Posterior vena cava (tissue), 2 donors: ENCODE measurements at regions of chr6 and their contacts with region 1.

Region 1: DNA sequence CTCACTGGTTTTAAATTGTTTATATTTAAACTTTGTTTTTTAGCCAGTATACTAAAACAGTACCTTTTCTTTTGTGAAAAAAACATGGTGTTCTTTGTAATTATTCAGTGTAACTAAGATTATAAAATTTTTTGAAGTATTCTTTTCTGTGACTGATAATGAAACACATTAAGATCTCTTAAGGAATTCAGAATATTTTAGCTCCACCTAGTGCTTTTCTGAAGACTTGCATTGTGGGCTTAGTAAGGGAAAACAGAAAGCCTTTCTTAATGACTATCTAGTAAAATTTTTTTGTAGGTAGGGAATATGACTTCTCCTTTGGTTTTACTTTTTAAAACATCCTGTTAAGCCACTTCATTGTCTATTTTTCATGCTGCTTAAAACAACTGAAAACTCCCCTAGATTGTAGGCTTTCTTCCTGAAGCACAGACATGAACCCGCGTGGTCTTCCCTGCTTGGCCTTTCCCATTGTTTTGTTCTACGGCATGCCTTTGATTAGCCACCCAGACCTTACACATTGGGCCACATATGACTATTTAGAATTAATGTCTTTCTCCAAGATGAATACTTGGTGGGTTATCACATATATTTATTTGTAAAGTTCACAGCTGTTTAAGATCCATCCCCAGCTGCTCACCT is 72.1 kb downstream of the AFDN start:
- DNase-seq: no peak

Region 2: DNA sequence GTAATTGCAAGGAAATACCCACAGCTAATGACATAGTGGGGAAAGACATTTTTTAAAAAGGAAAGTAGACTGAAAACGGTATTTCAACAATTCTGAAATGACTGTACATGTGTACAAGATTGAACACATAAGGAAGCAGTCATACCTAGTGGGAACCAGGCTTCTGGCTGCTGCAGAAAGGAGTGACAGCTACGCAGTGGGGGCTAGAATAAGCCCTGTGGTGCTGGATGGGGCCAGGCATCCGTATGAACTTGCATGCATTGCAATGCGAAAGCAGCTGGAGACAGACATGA is 686.1 kb before region 1 on chr6:
- intact Hi-C with region 1: loop called in 1 of 2 experiments (anchors 10 kb)
- DNase-seq: no peak

Region 3: GRCh38 chr6:167238146-167238693 is 660.6 kb before region 1 on chr6:
- intact Hi-C with region 1: no loop called
- DNase-seq: no peak

Region 4: GRCh38 chr6:167573461-167574215 is 325.2 kb before region 1 on chr6:
- intact Hi-C with region 1: no loop called
- DNase-seq: peak; percentile 79